ENCODE measurements at regions of chr7 and their contacts with region 1.

Region 1: DNA sequence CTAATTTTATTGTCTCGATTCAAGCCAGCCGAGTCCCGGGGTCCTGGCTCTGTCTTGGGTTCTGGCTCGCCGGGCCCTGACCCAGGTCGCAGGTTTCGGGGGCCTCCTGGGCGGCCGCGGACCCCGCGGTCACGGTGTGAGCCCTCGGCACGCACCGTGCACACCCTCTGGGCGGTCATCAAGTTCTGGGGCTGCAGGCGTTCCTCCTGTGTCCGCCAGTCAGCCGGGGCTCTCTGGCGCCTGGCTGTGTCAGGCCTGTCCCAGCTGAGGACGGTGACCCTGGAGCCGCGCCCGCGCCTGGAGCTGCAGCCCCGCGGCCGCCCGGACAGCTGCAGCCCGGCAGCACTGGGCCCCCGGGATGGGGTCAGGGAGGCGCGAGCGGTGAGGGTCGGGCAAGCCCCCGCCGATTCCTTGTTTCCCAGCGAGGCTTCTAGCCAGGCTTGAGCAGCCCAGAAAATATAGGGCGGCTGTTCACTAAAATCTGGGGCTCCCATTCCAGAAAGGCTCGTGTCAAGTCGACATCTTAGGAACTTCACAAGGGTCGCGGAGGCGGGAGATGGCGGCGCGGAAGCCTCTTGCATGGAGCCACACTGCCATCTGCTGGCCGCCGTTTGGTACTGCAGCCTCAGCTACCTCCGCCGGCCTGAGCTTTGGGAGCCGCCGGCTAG is 4.2 kb upstream of the HOXA7 start:
- DNase-seq: peak; percentile 69 to 89 (median 84)
- ATAC-seq: peak; percentile 91
- H3K4me3 ChIP-seq: peak overlapping the region; percentile 81
- H3K4me3 Mint-ChIP-seq: peak overlapping the region; percentile 71 to 88 (median 80)
- H3K27ac ChIP-seq: no peak overlapping the region
- H3K27ac Mint-ChIP-seq: peak overlapping the region in 1 of 9 donors; percentile 33
- H3K4me1 ChIP-seq: peaks cover 24 to 38% of the 10 kb centered on the region in 2 donors
- H3K4me1 Mint-ChIP-seq: peaks cover 15 to 52% (median 34%) of the 10 kb centered on the region in 7 donors
- H3K27me3 ChIP-seq: peaks cover 27 to 61% of the 10 kb centered on the region in 2 donors
- H3K27me3 Mint-ChIP-seq: peaks cover 62 to 89% (median 77%) of the 10 kb centered on the region in 5 donors

Region 2: GRCh38 chr7:25862260-25863037 is 1298.2 kb before region 1 on chr7:
- CTCF ChIA-PET with region 1: no interaction called
- POLR2A ChIA-PET with region 1: no interaction called
- intact Hi-C with region 1: loop called in 1 of 2 experiments (anchors 2 kb)
- DNase-seq: peak; percentile 32 to 95 (median 49)
- ATAC-seq: peak; percentile 93
- H3K4me3 ChIP-seq: peak overlapping the region; percentile 4
- H3K4me3 Mint-ChIP-seq: peak overlapping the region in 8 of 10 donors; percentile 38 to 87 (median 61)
- H3K27ac ChIP-seq: no peak overlapping the region
- H3K27ac Mint-ChIP-seq: peak overlapping the region in 8 of 9 donors; percentile 14 to 88 (median 84)
- H3K4me1 ChIP-seq: peaks cover 0 to 6% of the 10 kb centered on the region in 2 donors
- H3K4me1 Mint-ChIP-seq: peaks cover 8 to 46% (median 20%) of the 10 kb centered on the region in 7 donors
- H3K27me3 ChIP-seq: peaks cover 35 to 87% of the 10 kb centered on the region in 2 donors
- H3K27me3 Mint-ChIP-seq: peaks cover 23 to 82% (median 62%) of the 10 kb centered on the region in 5 donors

Region 3: GRCh38 chr7:25951031-25951948 is 1209.4 kb before region 1 on chr7:
- CTCF ChIA-PET with region 1: no interaction called
- POLR2A ChIA-PET with region 1: no interaction called
- intact Hi-C with region 1: loop called in 1 of 2 experiments (anchors 5 kb)
- DNase-seq: peak; percentile 70 to 94 (median 87)
- ATAC-seq: peak; percentile 99
- H3K4me3 ChIP-seq: peak overlapping the region; percentile 61
- H3K4me3 Mint-ChIP-seq: peak overlapping the region; percentile 87 to 94 (median 92)
- H3K27ac ChIP-seq: peak overlapping the region; percentile 52
- H3K27ac Mint-ChIP-seq: peak overlapping the region in 7 of 9 donors; percentile 45 to 87 (median 81)
- H3K4me1 ChIP-seq: peaks cover 7 to 14% of the 10 kb centered on the region in 2 donors
- H3K4me1 Mint-ChIP-seq: peaks cover 16 to 31% (median 20%) of the 10 kb centered on the region in 7 donors
- H3K27me3 ChIP-seq: no peaks in the 10 kb centered on the region
- H3K27me3 Mint-ChIP-seq: peaks cover 0 to 22% (median 5%) of the 10 kb centered on the region in 5 donors

Region 4: GRCh38 chr7:26090927-26091519 is 1069.7 kb before region 1 on chr7:
- CTCF ChIA-PET with region 1: no interaction called
- POLR2A ChIA-PET with region 1: no interaction called
- intact Hi-C with region 1: loop called in 1 of 2 experiments (anchors 5 kb)
- DNase-seq: peak in 7 of 9 donors; percentile 19 to 63 (median 53)
- ATAC-seq: peak; percentile 64
- H3K4me3 ChIP-seq: no peak overlapping the region
- H3K4me3 Mint-ChIP-seq: peak overlapping the region in 9 of 10 donors; percentile 4 to 50 (median 30)
- H3K27ac ChIP-seq: no peak overlapping the region
- H3K27ac Mint-ChIP-seq: peak overlapping the region in 6 of 9 donors; percentile 1 to 68 (median 2)
- H3K4me1 ChIP-seq: peaks cover 0 to 20% of the 10 kb centered on the region in 2 donors
- H3K4me1 Mint-ChIP-seq: peaks cover 11 to 54% (median 22%) of the 10 kb centered on the region in 7 donors
- H3K27me3 ChIP-seq: no peaks in the 10 kb centered on the region
- H3K27me3 Mint-ChIP-seq: no peaks in the 10 kb centered on the region

Region 5: DNA sequence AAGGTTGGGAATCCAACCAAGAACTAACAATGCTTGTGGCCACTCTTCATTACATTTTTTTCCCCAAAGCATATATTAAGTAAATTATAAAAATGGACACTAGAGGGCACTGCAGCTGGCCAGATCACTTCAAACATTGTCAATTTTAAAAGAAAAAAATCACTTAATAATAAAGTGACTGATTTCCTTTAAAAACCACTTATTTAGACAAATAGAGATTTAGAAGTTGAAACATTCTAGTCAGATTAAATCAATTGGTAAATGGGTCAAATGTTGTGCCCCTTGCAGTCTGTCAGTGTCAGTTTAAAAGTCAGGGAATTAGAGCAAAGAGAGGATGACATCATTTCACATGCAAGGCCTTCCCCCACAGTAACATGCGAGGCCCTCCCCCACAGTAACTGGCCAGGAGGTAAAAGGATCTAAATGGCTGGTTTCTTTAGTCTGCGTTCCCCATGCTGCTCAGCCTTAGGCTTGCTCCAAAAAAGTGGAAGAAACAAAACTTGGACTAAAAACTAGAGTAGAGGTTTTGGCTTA is 474.2 kb before region 1 on chr7:
- CTCF ChIA-PET with region 1: interaction called, 4 read pairs
- POLR2A ChIA-PET with region 1: interaction called, 6 read pairs
- intact Hi-C with region 1: loop called (anchors 1 kb)
- DNase-seq: peak in 7 of 9 donors; percentile 7 to 49 (median 30)
- ATAC-seq: peak; percentile 54
- H3K4me3 ChIP-seq: no peak overlapping the region
- H3K4me3 Mint-ChIP-seq: no peak overlapping the region
- H3K27ac ChIP-seq: no peak overlapping the region
- H3K27ac Mint-ChIP-seq: no peak overlapping the region
- H3K4me1 ChIP-seq: no peaks in the 10 kb centered on the region
- H3K4me1 Mint-ChIP-seq: peaks cover 0 to 1% (median 0%) of the 10 kb centered on the region in 7 donors
- H3K27me3 ChIP-seq: peaks cover 0 to 11% of the 10 kb centered on the region in 2 donors
- H3K27me3 Mint-ChIP-seq: peaks cover 38 to 67% (median 45%) of the 10 kb centered on the region in 5 donors

Region 6: DNA sequence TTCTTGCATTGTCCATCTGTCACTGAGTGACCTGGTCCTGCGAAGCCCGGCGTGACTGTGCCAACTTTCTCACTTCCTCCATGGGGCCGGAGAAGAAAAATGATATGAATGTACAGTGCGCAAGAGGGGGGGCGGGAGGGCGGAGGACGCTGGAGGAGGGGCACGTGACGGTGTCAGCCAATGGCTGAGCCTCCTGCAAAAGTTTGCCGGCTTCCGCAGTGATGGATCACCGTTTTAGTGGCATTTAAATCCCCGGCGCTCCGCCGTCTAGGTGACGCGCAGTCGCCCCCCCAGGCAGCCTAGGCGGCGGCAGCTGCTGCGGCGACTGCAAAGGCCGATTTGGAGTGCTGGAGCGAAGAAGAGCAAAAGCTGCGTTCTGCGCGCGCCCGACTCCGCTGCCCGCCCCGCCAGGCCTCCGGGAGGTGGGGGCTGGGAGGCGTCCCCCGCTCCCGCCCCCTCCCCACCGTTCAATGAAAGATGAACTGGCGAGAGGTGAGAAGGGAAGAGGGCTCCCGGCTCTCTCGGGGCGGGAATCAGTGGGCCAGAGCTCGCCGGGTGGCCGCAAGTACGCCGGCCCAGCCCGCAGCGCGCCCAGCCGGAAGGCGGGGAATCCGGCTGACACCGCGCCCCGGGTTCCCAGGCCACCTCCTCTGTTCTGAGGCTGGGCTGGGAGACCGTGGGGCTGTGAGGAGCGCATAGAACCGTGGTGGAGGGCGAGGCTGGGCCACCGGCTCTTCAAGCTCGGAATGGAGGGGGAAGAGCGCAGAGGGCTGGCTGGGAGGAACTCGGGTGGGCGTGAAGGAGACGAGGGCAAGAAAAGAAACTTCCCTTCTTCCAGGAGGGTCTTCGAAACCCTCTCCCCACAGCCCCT is 64.5 kb before region 1 on chr7 and contains the start of gene HOXA1:
- CTCF ChIA-PET with region 1: no interaction called
- POLR2A ChIA-PET with region 1: no interaction called
- intact Hi-C with region 1: loop called in 1 of 2 experiments (anchors 5 kb)
- DNase-seq: peak; percentile 44 to 72 (median 63)
- ATAC-seq: peak; percentile 90
- H3K4me3 ChIP-seq: peak within 1 kb of the TSS; percentile 76
- H3K4me3 Mint-ChIP-seq: peak within 1 kb of the TSS; percentile 79 to 94 (median 88)
- H3K27ac ChIP-seq: peak within 1 kb of the TSS; percentile 57
- H3K27ac Mint-ChIP-seq: peak within 1 kb of the TSS in 4 of 9 donors; percentile 33 to 77 (median 66)
- H3K4me1 ChIP-seq: peaks cover 9 to 21% of the 10 kb centered on the region in 2 donors
- H3K4me1 Mint-ChIP-seq: peaks cover 9 to 36% (median 30%) of the 10 kb centered on the region in 7 donors
- H3K27me3 ChIP-seq: peaks cover 3 to 9% of the 10 kb centered on the region in 2 donors
- H3K27me3 Mint-ChIP-seq: peaks cover 85 to 94% (median 87%) of the 10 kb centered on the region in 5 donors
- total RNA-seq, gene HOXA1: 0.10 to 1.1 (median 0.41) TPM in 4 of 5 experiments, not detected in the other

Region 7: GRCh38 chr7:27242555-27243339 is 82.1 kb after region 1 on chr7 and contains the start of gene EVX1:
- CTCF ChIA-PET with region 1: no interaction called
- POLR2A ChIA-PET with region 1: no interaction called
- intact Hi-C with region 1: loop called in 1 of 2 experiments (anchors 5 kb)
- DNase-seq: peak in 7 of 9 donors; percentile 29 to 74 (median 52)
- ATAC-seq: peak; percentile 60
- H3K4me3 ChIP-seq: no peak within 1 kb of the TSS
- H3K4me3 Mint-ChIP-seq: peak within 1 kb of the TSS in 9 of 10 donors; percentile 32 to 81 (median 57)
- H3K27ac ChIP-seq: no peak within 1 kb of the TSS
- H3K27ac Mint-ChIP-seq: peak within 1 kb of the TSS in 6 of 9 donors; percentile 40 to 84 (median 62)
- H3K4me1 ChIP-seq: peaks cover 0 to 3% of the 10 kb centered on the region in 2 donors
- H3K4me1 Mint-ChIP-seq: peaks cover 4 to 52% (median 46%) of the 10 kb centered on the region in 7 donors
- H3K27me3 ChIP-seq: peaks cover 0 to 37% of the 10 kb centered on the region in 2 donors
- H3K27me3 Mint-ChIP-seq: peaks cover 70 to 88% (median 81%) of the 10 kb centered on the region in 5 donors
- total RNA-seq, gene EVX1: 0.11 TPM in 1 of 5 experiments, not detected in the others

Region 8: DNA sequence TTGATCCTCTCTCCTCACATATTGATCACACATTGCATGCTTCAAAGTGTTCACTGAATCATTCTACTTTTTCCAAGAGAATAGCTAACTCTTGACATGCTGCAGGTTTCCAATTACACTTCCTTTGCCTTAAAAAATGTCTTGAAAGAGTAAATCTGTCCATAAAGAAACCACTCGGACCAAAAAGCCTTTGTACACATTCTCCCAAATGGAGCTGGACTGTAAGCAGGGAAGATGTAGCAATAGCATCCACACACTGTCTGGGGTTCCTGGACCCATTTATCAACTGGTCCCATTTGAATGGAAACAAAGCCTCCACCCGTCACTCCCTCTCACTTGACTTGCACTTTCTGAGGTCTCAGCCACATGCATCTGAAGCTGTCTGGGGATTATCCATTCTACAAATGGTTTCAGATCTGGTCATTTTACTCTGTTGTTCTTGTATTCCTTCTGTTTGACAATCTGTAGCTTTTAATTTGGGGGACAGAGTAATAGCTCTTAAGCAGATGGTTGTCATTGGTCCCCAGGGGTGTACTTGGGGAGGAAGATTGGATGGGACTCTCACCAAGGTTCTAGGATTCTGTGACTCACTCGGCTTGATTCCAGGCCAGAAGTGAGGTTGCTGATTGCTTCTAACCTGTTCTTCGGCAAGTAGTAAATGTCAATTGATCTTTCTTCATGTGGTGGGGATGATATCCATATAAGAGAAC is 298.5 kb after region 1 on chr7:
- CTCF ChIA-PET with region 1: no interaction called
- POLR2A ChIA-PET with region 1: no interaction called
- intact Hi-C with region 1: no loop called
- DNase-seq: no peak
- ATAC-seq: no peak
- H3K4me3 ChIP-seq: no peak overlapping the region
- H3K4me3 Mint-ChIP-seq: no peak overlapping the region
- H3K27ac ChIP-seq: no peak overlapping the region
- H3K27ac Mint-ChIP-seq: no peak overlapping the region
- H3K4me1 ChIP-seq: no peaks in the 10 kb centered on the region
- H3K4me1 Mint-ChIP-seq: no peaks in the 10 kb centered on the region
- H3K27me3 ChIP-seq: no peaks in the 10 kb centered on the region
- H3K27me3 Mint-ChIP-seq: peaks cover 0 to 51% (median 25%) of the 10 kb centered on the region in 5 donors

Measured in naive thymus-derived CD4-positive, alpha-beta T cell (primary cell).